Dendritic cell treated with granulocyte-macrophage colony-stimulating factor and Interleukin-4, amounts not matched to agents 40 ng/mL and 50 ng/mL, for 4 days (primary cell): ENCODE measurements at regions of chr17 and their contacts with region 1.

Region 1: GRCh38 chr17:39927101-39927928 is at the starts of genes LRRC3C and ORMDL3:
- H3K4me3 Mint-ChIP-seq: peak within 1 kb of the TSS; percentile 77
- H3K27ac Mint-ChIP-seq: peak within 1 kb of the TSS; percentile 82
- H3K4me1 Mint-ChIP-seq: peaks cover 65% of the 10 kb centered on the region
- H3K27me3 Mint-ChIP-seq: no peaks in the 10 kb centered on the region

Region 2: DNA sequence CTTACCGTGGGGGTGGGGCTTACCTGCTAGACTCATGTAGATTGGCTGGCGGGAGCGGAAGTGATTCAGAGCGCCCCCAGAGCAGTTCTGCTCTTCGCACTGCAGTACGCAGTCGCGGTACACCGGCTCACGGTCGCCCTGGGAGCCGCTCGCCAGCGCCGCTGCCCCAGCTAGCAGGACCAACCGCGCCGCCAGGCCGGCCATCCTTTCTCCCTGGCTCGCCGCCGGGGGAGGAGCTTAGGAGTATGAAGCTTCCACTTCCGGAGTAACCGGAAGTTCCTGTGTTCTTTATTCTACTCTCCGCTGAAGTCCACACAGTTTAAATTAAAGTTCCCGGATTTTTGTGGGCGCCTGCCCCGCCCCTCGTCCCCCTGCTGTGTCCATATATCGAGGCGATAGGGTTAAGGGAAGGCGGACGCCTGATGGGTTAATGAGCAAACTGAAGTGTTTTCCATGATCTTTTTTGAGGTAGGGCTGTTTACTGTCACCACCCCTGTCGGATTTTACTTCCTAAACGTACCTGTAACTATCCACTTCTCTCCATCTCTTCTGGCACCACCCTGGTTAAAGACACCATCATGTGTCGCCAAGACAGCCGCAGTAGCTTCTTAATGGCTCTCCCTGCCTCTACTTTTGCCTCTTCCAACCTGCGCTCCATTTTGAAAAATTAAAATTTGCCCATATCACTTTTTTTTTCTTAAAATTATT is 239.3 kb before region 1 on chr17 and contains the start of gene PGAP3:
- intact Hi-C with region 1: loop called (anchors 5 kb)
- H3K4me3 Mint-ChIP-seq: peak within 1 kb of the TSS; percentile 84
- H3K27ac Mint-ChIP-seq: peak within 1 kb of the TSS; percentile 84
- H3K4me1 Mint-ChIP-seq: peaks cover 21% of the 10 kb centered on the region
- H3K27me3 Mint-ChIP-seq: peaks cover 5% of the 10 kb centered on the region

Region 3: GRCh38 chr17:39845052-39845846 is 82.1 kb before region 1 on chr17:
- intact Hi-C with region 1: no loop called
- H3K4me3 Mint-ChIP-seq: no peak overlapping the region
- H3K27ac Mint-ChIP-seq: no peak overlapping the region
- H3K4me1 Mint-ChIP-seq: no peaks in the 10 kb centered on the region
- H3K27me3 Mint-ChIP-seq: peaks cover 60% of the 10 kb centered on the region

Region 4: GRCh38 chr17:39952680-39953470 is 25.6 kb after region 1 on chr17:
- intact Hi-C with region 1: loop called (anchors 2 kb)
- H3K4me3 Mint-ChIP-seq: peak overlapping the region; percentile 72
- H3K27ac Mint-ChIP-seq: peak overlapping the region; percentile 85
- H3K4me1 Mint-ChIP-seq: peaks cover 58% of the 10 kb centered on the region
- H3K27me3 Mint-ChIP-seq: peaks cover 24% of the 10 kb centered on the region